Adrenal gland (tissue), 19 donors: ENCODE measurements at regions of chr12 and their contacts with region 1.

Region 1: GRCh38 chr12:94532490-94533422 is 73.1 kb upstream of the CEP83 start:
- DNase-seq: peak; percentile 65 to 87 (median 70)
- H3K4me3 ChIP-seq: no peak overlapping the region
- H3K27ac ChIP-seq: no peak overlapping the region
- H3K4me1 ChIP-seq: peaks cover 0 to 7% of the 10 kb centered on the region in 2 donors
- H3K27me3 ChIP-seq: no peaks in the 10 kb centered on the region
- CTCF ChIP-seq: peak; percentile 62 to 93 (median 88)
- POLR2A ChIP-seq: no peak

Region 2: DNA sequence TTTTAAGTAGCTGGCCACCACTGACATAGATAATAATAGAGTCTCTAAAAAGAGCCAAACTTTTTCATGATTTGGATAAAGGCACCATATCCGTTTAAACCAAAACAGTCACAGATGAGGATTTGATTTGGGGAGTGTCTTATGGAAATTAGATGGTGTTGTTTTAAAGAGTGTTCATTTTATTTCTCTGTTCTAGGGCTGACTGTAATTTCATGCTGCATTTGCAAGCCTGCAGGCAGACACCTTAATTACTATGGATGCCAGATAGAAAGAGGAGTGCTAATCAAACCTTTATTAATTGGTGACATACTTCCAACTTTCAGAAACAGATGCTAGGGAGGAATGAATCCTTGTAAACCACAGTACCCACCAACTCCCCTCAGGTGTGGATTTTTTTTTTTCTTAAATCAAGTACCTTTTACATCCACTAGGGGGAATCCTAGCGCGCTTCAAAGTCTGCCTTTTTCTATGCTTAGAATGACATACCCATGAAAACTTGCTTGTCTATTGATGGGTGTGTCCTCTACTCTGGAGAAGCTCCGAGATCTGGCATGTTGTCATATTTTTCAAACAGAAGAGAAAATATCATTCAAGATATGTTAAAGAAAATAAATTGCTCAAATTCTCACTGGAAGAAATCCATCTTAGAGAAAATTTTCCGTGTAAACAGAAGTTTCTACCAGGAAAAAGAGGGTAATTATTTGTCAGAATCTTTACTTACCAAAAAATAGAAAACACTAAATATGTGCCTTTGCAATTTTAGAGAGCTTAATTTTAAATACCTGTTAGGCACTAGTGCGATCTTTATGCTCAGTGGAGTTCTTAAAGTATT is 398.6 kb before region 1 on chr12:
- intact Hi-C with region 1: loop called in 1 of 2 experiments (anchors 2 kb)
- DNase-seq: peak in 2 of 7 donors; percentile 31 to 37
- H3K4me3 ChIP-seq: no peak overlapping the region
- H3K27ac ChIP-seq: no peak overlapping the region
- H3K4me1 ChIP-seq: no peaks in the 10 kb centered on the region
- H3K27me3 ChIP-seq: no peaks in the 10 kb centered on the region
- CTCF ChIP-seq: peak; percentile 65 to 83 (median 77)
- POLR2A ChIP-seq: no peak

Region 3: DNA sequence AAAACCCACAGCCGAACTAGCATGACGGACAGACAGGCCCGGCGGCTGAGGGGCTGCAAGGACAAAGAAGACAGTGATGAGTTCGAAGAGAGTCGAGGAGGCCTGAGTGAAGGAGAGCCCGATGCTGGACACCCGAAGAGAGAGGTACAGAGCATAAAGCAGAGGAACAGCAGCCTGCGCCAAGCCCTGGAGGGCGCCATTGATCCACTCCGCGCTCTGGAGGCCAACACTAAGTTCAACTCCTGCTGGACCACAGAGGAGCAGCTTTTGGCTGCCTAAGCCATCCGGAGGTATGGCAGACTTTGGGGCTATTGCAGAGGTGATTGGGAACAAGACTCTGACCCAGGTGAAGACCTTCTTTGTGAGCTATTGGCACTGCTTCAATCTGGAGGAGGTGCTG is 392.2 kb before region 1 on chr12:
- intact Hi-C with region 1: loop called (anchors 2 to 5 kb)
- DNase-seq: peak in 1 of 7 donors; percentile 13
- H3K4me3 ChIP-seq: no peak overlapping the region
- H3K27ac ChIP-seq: no peak overlapping the region
- H3K4me1 ChIP-seq: no peaks in the 10 kb centered on the region
- H3K27me3 ChIP-seq: no peaks in the 10 kb centered on the region
- CTCF ChIP-seq: peak in 2 of 6 experiments; percentile 15 to 32
- POLR2A ChIP-seq: no peak